ENCODE measurements at regions of chr4 and their contacts with region 1.

Region 1: GRCh38 chr4:52983563-52984303 is 121.6 kb downstream of the RASL11B start:
- DNase-seq: peak; percentile 49
- H3K4me3 ChIP-seq: no peak overlapping the region; a peak in 1 of 4 replicates
- H3K27ac ChIP-seq: peak overlapping the region in 1 of 2 experiments; percentile 80; a peak in 2 of 4 replicates
- H3K4me1 ChIP-seq: peaks cover 0 to 42% of the 10 kb centered on the region in 2 experiments; a peak in 2 of 4 replicates
- H3K27me3 ChIP-seq: no peaks in the 10 kb centered on the region
- CTCF ChIP-seq: peak; percentile 81
- EP300 ChIP-seq: no peak
- RAD21 ChIP-seq: peak; percentile 77

Region 2: DNA sequence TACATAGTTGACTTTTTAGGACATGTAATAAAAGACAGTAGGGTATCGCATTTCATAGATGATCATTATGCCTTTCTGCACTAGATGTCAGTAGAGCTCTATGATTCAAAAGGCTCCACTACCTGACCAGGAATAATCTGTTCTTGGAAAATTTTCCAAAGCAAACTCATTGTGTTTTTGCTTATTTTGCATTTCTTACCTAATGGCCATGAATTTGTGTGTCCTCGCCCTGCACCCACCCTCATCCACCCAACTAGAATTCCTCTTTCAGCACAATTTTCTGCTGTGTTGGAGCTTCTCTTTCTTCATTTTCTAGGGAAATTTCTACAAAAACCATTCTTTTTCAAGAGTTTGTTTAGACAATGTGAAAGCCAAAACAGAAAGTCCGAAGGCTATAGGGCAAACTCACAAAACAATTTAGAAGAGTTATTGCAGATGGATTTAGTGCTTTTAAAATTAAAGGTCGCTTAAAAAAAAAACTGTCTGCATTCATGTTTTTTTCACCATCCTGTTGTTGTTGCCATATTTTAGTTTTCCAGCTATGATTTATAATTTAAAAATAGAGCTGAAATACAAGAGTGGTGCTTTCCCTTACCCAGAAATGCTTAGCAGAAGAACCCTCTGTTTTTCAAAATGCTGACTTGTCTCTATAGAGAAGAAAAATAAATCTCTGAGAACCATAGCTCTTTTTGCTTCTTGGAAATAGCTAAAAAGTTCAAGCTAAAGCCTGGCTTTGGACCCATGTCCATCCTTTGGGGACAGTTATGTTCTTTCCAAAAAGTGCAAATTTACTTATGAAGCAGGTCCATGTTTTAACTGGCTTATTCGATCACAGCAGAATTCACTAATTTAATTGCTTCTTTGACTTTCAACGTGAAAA is 748.9 kb before region 1 on chr4:
- CTCF ChIA-PET with region 1: interaction called, 82 read pairs
- POLR2A ChIA-PET with region 1: no interaction called
- DNase-seq: peak; percentile 38
- H3K4me3 ChIP-seq: no peak overlapping the region; a peak in 2 of 4 replicates
- H3K27ac ChIP-seq: no peak overlapping the region; a peak in 1 of 4 replicates
- H3K4me1 ChIP-seq: no peaks in the 10 kb centered on the region; a peak in 1 of 4 replicates
- H3K27me3 ChIP-seq: no peaks in the 10 kb centered on the region
- CTCF ChIP-seq: peak; percentile 56
- EP300 ChIP-seq: no peak
- RAD21 ChIP-seq: peak; percentile 95

Region 3: DNA sequence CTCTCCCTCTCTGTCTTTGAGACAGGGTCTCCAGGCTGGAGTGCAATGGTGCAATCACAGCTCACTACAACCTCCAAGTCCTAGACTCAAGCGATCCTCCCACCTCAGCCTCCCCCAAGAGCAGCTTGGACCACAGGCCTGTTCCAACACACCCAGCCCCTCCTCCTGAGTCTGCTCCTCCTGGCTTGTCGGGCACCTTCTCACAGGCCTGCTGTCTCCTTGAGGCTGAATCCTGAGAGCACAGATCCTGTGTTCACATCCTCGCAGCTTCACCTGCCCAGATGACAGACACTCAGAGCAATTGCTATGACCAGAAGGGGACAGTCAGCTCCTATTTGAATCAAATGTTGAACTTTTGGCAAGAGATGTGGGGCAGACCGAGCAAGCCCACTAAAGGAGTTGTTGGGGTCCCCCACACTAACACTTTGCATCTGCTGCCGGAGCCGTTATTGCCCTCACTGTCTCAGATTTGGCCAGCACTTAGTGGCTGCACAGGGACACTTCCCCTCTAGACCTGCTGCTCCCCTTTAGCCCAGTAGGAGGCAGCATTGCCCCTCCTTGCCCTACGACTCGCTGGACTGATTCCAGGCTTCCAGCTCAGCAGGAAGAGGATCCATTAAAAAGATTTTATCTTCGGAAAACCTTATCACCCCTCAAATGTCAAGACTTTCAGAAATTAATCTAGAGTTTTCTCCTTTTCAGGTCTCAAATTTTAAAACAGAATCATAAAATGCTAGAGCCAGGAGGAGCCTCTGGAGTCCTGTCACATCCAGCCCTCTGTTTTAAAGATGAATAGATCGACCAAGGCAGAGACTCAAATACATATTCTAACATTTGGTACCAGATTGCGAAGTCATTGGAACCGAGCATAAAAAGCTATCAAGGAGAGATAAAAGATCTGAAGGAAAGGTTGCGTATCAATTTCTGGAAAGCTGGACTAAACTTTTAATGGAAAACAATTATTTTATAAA is 438.3 kb before region 1 on chr4:
- CTCF ChIA-PET with region 1: interaction called, 135 read pairs
- POLR2A ChIA-PET with region 1: interaction called, 5 read pairs
- DNase-seq: peak; percentile 79
- H3K4me3 ChIP-seq: peak overlapping the region; percentile 27 to 46; a peak in 2 of 4 replicates
- H3K27ac ChIP-seq: peak overlapping the region in 1 of 2 experiments; percentile 47; a peak in 2 of 4 replicates
- H3K4me1 ChIP-seq: peaks cover 0 to 8% of the 10 kb centered on the region in 2 experiments; a peak in 2 of 4 replicates
- H3K27me3 ChIP-seq: no peaks in the 10 kb centered on the region
- CTCF ChIP-seq: peak; percentile 96
- EP300 ChIP-seq: peak in 1 of 2 experiments; percentile 49; a peak in 1 of 4 replicates
- RAD21 ChIP-seq: peak; percentile 98

Region 4: DNA sequence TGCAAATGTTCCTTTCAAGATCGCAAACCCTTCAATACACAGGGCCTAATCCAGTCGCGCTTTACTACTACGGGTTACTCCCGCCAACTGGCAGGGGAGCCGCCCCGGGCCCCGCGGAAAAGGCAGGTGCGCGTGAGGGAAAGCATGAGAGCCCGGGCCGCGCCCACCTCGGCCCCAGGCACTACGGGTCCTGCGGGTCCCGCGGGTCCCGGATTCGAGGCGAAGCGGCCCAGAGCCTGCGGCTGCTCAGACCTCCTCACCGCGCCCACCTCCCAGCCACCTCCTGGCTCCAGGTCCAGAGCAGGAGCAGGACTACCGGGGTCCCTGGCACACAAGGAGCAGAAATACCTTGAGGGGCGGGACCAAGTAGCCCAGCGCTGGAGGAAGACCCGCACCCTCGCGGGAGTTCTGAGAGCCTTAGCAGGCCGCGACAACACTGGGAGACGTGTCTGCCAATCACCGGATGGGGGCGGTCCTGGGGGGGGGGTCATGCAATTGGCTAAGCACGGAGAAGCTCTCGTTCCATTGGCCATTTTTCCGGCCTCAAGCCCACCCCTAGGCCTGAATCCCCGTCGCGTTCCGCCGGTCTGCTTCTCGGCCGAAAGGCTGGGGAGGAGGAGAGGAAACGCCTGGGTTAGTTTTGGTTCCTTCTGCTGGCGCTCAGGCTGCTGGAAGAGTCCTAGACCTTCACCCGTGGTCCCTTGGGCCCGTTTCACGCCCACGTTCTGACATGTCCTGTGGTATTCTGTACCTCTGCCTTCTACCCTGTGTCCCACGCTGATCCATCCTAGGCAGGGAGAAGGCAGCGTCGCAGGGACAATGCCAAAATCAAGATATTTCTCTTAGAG is 261.5 kb before region 1 on chr4:
- CTCF ChIA-PET with region 1: interaction called, 11 read pairs
- POLR2A ChIA-PET with region 1: no interaction called
- DNase-seq: peak; percentile 95
- H3K4me3 ChIP-seq: peak overlapping the region; percentile 72 to 80
- H3K27ac ChIP-seq: peak overlapping the region; percentile 42 to 96; a peak in 3 of 4 replicates
- H3K4me1 ChIP-seq: no peaks in the 10 kb centered on the region; a peak in 1 of 4 replicates
- H3K27me3 ChIP-seq: no peaks in the 10 kb centered on the region
- CTCF ChIP-seq: no peak
- EP300 ChIP-seq: no peak
- RAD21 ChIP-seq: 0 out of 2 replicates have a peak, but pooled peaks have one; percentile 16

Region 5: GRCh38 chr4:52869196-52869595 is 114.5 kb before region 1 on chr4:
- CTCF ChIA-PET with region 1: interaction called, 55 read pairs
- POLR2A ChIA-PET with region 1: interaction called, 4 read pairs
- DNase-seq: peak; percentile 88
- H3K4me3 ChIP-seq: no peak overlapping the region
- H3K27ac ChIP-seq: peak overlapping the region; percentile 25 to 100; a peak in 3 of 4 replicates
- H3K4me1 ChIP-seq: peaks cover 0 to 76% of the 10 kb centered on the region in 2 experiments; a peak in 3 of 4 replicates
- H3K27me3 ChIP-seq: no peaks in the 10 kb centered on the region
- CTCF ChIP-seq: no peak
- EP300 ChIP-seq: peak in 1 of 2 experiments; percentile 94; a peak in 2 of 4 replicates
- RAD21 ChIP-seq: peak; percentile 40; the same call in 1 of the 2 replicates

Region 6: DNA sequence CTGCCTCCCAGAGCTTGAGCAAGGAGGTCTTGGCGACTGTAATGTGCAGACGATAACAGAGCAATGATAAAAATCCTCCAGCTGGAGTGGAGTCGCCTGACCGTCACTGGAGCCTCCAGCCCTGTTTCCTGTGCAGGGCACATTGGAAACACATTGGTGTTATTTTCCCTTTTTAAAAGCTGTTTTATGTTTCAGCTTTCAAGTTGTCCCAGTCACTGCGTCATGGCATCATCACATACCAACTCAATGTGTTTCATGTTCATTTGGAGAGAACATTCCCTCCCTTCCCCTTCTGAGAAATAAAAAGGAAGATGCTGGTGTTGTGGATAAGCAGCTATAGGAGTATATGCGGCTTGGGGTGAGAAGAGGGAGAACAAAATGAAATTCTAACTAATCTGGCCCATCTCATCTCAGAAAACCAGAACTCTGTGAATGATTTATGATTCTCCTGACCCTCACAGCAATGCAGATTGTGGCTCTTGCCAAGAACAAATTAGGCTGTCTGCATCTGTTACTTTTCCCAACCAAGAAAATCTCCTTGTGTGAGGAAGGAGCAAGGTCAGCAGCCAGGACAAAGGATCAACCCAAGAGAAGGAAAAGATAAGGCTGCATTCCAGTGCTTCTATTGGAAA is 12.6 kb after region 1 on chr4:
- CTCF ChIA-PET with region 1: interaction called, 13 read pairs
- POLR2A ChIA-PET with region 1: no interaction called
- DNase-seq: peak; percentile 71
- H3K4me3 ChIP-seq: peak overlapping the region in 1 of 2 experiments; percentile 9; a peak in 1 of 4 replicates
- H3K27ac ChIP-seq: peak overlapping the region; percentile 43 to 100
- H3K4me1 ChIP-seq: peaks cover 0 to 49% of the 10 kb centered on the region in 2 experiments; a peak in 2 of 4 replicates
- H3K27me3 ChIP-seq: no peaks in the 10 kb centered on the region
- CTCF ChIP-seq: no peak
- EP300 ChIP-seq: peak; percentile 70 to 92
- RAD21 ChIP-seq: peak; percentile 5; the same call in 1 of the 2 replicates

Measured in SK-N-SH (cell line).